MCF 10A (cell line): ENCODE measurements at regions of chr20 and their contacts with region 1.

Region 1: DNA sequence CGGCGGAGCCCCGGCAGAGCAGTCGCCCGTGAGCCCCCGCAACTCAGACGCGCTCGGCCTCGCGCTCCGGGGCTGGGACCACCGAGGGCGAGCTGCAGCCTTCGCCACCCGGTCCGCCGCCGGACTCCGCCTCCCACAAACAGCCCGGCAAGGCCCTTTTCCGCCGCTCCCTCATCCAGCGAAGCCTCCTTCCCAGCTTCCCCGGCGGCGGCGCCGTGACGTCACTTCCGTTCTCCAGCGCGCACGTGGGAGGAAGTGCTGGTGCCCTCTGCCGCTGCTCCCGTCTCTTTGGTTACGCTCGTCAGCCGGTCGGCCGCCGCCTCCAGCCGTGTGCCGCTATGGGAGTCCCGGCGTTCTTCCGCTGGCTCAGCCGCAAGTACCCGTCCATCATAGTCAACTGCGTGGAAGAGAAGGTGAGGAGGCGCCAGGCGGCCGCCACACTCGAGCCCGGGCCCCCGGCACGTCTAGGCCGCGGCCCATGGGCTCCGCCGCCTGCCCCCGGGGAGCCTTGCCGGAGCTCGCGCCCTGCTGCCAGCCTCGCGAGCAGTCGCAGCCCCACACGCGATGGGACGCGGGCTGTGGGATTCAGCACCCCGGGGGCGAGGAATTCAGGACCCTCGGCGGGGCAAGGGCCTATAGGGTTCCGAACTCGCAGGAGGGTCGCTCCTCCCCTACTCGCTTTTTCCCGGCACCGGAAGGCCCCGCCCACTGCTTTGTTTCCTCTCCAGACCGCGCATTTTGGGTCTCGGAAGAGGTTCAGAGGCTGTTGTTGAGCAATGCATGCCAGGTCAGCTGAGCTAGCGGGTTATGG is at the start of gene XRN2:
- DNase-seq: peak; percentile 95
- H3K4me3 Mint-ChIP-seq: peak within 1 kb of the TSS; percentile 87
- H3K27ac Mint-ChIP-seq: peak within 1 kb of the TSS; percentile 99
- H3K4me1 Mint-ChIP-seq: peaks cover 18% of the 10 kb centered on the region
- H3K27me3 Mint-ChIP-seq: no peaks in the 10 kb centered on the region
- CTCF ChIP-seq: no peak
- total RNA-seq, gene XRN2: 60.8 and 67.8 TPM in 2 replicates

Region 2: GRCh38 chr20:20690676-20691476 is 612.4 kb before region 1 on chr20:
- CTCF ChIA-PET with region 1: no interaction called
- POLR2A ChIA-PET with region 1: no interaction called
- intact Hi-C with region 1: no loop called
- DNase-seq: peak; percentile 43
- H3K4me3 Mint-ChIP-seq: no peak overlapping the region
- H3K27ac Mint-ChIP-seq: no peak overlapping the region
- H3K4me1 Mint-ChIP-seq: peaks cover 6% of the 10 kb centered on the region
- H3K27me3 Mint-ChIP-seq: no peaks in the 10 kb centered on the region
- CTCF ChIP-seq: no peak

Region 3: DNA sequence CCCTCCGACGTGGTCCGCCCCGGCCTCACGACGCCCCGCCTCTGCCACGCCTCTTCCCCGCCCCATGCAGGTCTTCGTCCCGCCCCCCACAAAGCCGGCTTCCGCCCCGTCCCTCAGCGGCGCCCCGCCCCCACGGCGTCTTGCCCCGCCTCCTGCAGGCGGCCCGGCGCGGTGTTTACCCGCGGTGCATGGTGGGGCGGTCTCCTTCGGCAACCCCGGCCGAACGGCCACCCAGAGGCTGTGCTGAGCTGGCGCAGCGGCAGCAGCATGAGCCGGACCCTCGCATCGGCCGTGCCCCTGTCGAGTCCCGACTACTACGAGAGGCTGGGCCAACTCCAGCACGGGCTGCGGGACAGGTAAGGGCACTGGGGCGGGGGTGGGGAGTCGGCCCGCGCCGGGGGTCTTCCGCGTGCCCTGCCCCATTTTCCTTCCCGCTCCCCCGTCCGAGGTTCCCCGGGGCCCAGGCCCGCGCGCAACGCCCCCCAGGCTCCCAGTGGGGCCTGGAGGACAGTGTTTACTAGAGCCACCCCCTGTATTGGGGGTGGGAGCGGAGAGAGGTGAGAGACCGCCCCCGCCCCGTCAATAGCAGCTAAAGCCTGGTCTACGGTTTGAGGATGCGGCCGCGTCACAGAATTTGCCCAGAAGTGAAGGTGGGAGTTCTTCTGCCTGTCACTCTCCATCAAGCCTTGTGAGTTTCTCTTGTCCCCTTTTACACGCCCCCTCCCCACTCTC is 177.3 kb before region 1 on chr20 and contains the start of gene KIZ:
- CTCF ChIA-PET with region 1: no interaction called
- POLR2A ChIA-PET with region 1: interaction called, 23 read pairs
- intact Hi-C with region 1: no loop called
- DNase-seq: peak; percentile 93
- H3K4me3 Mint-ChIP-seq: peak within 1 kb of the TSS; percentile 85
- H3K27ac Mint-ChIP-seq: peak within 1 kb of the TSS; percentile 86
- H3K4me1 Mint-ChIP-seq: peaks cover 9% of the 10 kb centered on the region
- H3K27me3 Mint-ChIP-seq: no peaks in the 10 kb centered on the region
- CTCF ChIP-seq: peak; percentile 31
- total RNA-seq, gene KIZ: 47.2 and 56.1 TPM in 2 replicates

Region 4: GRCh38 chr20:21291026-21291425 is 12.2 kb before region 1 on chr20:
- CTCF ChIA-PET with region 1: interaction called, 5 read pairs
- POLR2A ChIA-PET with region 1: interaction called, 20 read pairs
- intact Hi-C with region 1: no loop called
- DNase-seq: no peak
- H3K4me3 Mint-ChIP-seq: no peak overlapping the region
- H3K27ac Mint-ChIP-seq: no peak overlapping the region
- H3K4me1 Mint-ChIP-seq: no peaks in the 10 kb centered on the region
- H3K27me3 Mint-ChIP-seq: no peaks in the 10 kb centered on the region
- CTCF ChIP-seq: no peak

Region 5: DNA sequence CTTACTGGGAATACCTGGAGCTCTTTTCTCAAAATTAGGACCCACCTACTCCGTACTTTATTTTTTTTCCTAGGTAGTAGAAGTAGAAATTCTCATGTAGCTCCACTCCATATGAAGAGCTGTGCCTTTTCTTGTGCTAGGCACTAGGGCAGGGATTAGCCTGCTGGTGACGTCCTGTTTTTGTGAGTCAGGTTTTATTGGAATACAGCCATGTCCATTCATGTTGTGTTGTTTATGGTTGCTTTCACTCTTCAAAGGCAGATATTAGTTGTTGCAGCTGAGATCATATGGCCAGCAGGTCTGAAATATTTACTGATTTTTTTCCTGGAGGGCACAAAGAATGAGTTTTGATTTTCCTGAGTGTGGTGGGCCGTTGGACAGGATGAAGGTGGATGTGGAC is 20.4 kb after region 1 on chr20:
- CTCF ChIA-PET with region 1: interaction called, 9 read pairs
- POLR2A ChIA-PET with region 1: interaction called, 104 read pairs
- intact Hi-C with region 1: no loop called
- DNase-seq: peak; percentile 87
- H3K4me3 Mint-ChIP-seq: peak overlapping the region; percentile 53
- H3K27ac Mint-ChIP-seq: peak overlapping the region; percentile 77
- H3K4me1 Mint-ChIP-seq: peaks cover 38% of the 10 kb centered on the region
- H3K27me3 Mint-ChIP-seq: no peaks in the 10 kb centered on the region
- CTCF ChIP-seq: no peak

Region 6: GRCh38 chr20:21373436-21373835 is 70.2 kb after region 1 on chr20:
- CTCF ChIA-PET with region 1: no interaction called
- POLR2A ChIA-PET with region 1: interaction called, 10 read pairs
- intact Hi-C with region 1: no loop called
- DNase-seq: no peak
- H3K4me3 Mint-ChIP-seq: no peak overlapping the region
- H3K27ac Mint-ChIP-seq: peak overlapping the region; percentile 44
- H3K4me1 Mint-ChIP-seq: peaks cover 5% of the 10 kb centered on the region
- H3K27me3 Mint-ChIP-seq: no peaks in the 10 kb centered on the region
- CTCF ChIP-seq: no peak